GM12878 (cell line): ENCODE measurements at regions of chr2 and their contacts with region 1.

Region 1: GRCh38 chr2:11124503-11125068 is 30.7 kb upstream of the SLC66A3 start:
- DNase-seq: no peak
- ATAC-seq: peak; percentile 90
- H3K4me3 ChIP-seq: no peak overlapping the region
- H3K27ac ChIP-seq: no peak overlapping the region
- H3K4me1 ChIP-seq: no peaks in the 10 kb centered on the region
- H3K27me3 ChIP-seq: no peaks in the 10 kb centered on the region; a peak in 2 of 4 replicates
- CTCF ChIP-seq: peak; percentile 73 to 83 (median 81)
- EP300 ChIP-seq: no peak
- POLR2A ChIP-seq: no peak
- RAD21 ChIP-seq: peak; percentile 81

Region 2: DNA sequence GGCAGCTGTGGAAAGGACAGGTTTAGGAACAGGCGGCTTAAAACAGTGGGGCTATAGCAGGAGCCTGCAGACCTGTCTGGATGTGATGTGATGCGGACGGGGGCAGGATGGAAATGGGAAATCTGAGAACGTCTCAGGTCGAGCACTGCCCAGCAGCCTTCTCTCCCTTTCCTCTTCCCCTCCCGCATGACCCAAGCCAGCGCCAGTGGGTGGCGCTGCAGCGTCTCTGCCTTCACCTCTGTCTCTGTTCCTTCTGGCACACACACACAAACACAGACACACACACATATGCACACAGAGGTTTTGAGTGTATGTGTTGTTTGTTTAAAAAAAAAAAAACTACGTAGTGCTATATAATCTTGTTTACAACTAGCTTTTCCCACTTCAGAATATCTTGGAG is 51.3 kb before region 1 on chr2:
- CTCF ChIA-PET with region 1: interaction called, 4 read pairs
- POLR2A ChIA-PET with region 1: no interaction called
- RAD21 ChIA-PET with region 1: no interaction called
- SMC1A ChIA-PET with region 1: no interaction called
- in situ Hi-C with region 1: no loop called
- intact Hi-C with region 1: loop called (anchors 10 kb)
- DNase-seq: no peak
- ATAC-seq: peak; percentile 52; the same call in 2 of the 3 replicates
- H3K4me3 ChIP-seq: no peak overlapping the region
- H3K27ac ChIP-seq: no peak overlapping the region
- H3K4me1 ChIP-seq: no peaks in the 10 kb centered on the region
- H3K27me3 ChIP-seq: peaks cover 0 to 5% of the 10 kb centered on the region in 2 experiments; a peak in 2 of 4 replicates
- CTCF ChIP-seq: peak; percentile 28 to 46 (median 45); a peak in 4 of 6 replicates
- EP300 ChIP-seq: no peak
- POLR2A ChIP-seq: no peak
- RAD21 ChIP-seq: 0 out of 2 replicates have a peak, but pooled peaks have one; percentile 23

Region 3: GRCh38 chr2:11099122-11100070 is 25.2 kb before region 1 on chr2:
- CTCF ChIA-PET with region 1: no interaction called
- POLR2A ChIA-PET with region 1: no interaction called
- RAD21 ChIA-PET with region 1: no interaction called
- SMC1A ChIA-PET with region 1: no interaction called
- in situ Hi-C with region 1: no loop called
- intact Hi-C with region 1: loop called (anchors 1 kb)
- DNase-seq: no peak
- ATAC-seq: peak; percentile 41; the same call in 1 of the 3 replicates
- H3K4me3 ChIP-seq: no peak overlapping the region
- H3K27ac ChIP-seq: no peak overlapping the region
- H3K4me1 ChIP-seq: peaks cover 14% of the 10 kb centered on the region
- H3K27me3 ChIP-seq: peaks cover 0 to 4% of the 10 kb centered on the region in 2 experiments; a peak in 1 of 4 replicates
- CTCF ChIP-seq: peak; percentile 20 to 24 (median 22); a peak in 2 of 6 replicates
- EP300 ChIP-seq: no peak
- POLR2A ChIP-seq: no peak
- RAD21 ChIP-seq: 0 out of 2 replicates have a peak, but pooled peaks have one; percentile 14

Region 4: GRCh38 chr2:11175293-11175795 is 50.8 kb after region 1 on chr2:
- CTCF ChIA-PET with region 1: no interaction called
- POLR2A ChIA-PET with region 1: no interaction called
- RAD21 ChIA-PET with region 1: no interaction called
- SMC1A ChIA-PET with region 1: no interaction called
- in situ Hi-C with region 1: no loop called
- intact Hi-C with region 1: no loop called
- DNase-seq: no peak
- ATAC-seq: no peak
- H3K4me3 ChIP-seq: no peak overlapping the region
- H3K27ac ChIP-seq: no peak overlapping the region
- H3K4me1 ChIP-seq: no peaks in the 10 kb centered on the region
- H3K27me3 ChIP-seq: no peaks in the 10 kb centered on the region
- CTCF ChIP-seq: no peak
- EP300 ChIP-seq: no peak
- POLR2A ChIP-seq: no peak
- RAD21 ChIP-seq: no peak